ENCODE measurements at regions of chr3 and their contacts with region 1.

Region 1: DNA sequence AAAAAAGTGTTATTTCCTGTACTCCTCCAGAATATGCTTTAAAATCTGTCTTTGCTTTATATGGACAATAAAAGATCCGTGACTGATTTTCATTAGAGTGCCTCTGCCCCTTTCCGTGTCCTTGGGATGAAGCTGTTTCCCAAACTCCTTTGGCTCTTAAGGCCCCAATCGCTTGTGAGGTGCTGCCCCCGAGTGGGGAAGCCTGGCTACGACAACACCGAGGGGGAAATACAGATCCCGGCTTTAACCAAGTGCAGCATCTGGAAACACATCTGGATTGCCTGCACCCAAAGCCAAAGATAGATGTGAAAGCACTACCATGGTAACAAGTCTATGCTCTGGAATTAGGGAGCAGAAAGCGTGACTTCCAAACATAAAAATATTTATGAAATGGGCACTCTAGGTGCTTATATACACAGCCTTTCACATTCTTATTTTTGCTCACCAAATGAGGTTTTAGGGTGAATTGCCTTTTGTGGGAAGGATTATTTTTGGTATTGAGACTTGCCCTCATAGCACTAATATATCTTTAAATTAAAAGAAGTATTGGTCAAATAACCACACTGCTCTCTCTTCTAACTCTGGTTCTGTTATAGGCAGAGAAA is 40.6 kb upstream of the ADCY5 start:
- DNase-seq: peak; percentile 66
- ATAC-seq: peak; percentile 64
- H3K4me3 Mint-ChIP-seq: no peak overlapping the region
- H3K27ac Mint-ChIP-seq: no peak overlapping the region
- H3K4me1 Mint-ChIP-seq: peaks cover 7% of the 10 kb centered on the region
- H3K27me3 Mint-ChIP-seq: no peaks in the 10 kb centered on the region
- CTCF ChIP-seq: peak; percentile 86

Region 2: GRCh38 chr3:123328851-123329635 is 160.5 kb before region 1 on chr3:
- CTCF ChIA-PET with region 1: interaction called, 28 read pairs
- POLR2A ChIA-PET with region 1: no interaction called
- intact Hi-C with region 1: loop called (anchors 2 kb)
- DNase-seq: peak; percentile 83
- ATAC-seq: peak; percentile 93
- H3K4me3 Mint-ChIP-seq: no peak overlapping the region
- H3K27ac Mint-ChIP-seq: no peak overlapping the region
- H3K4me1 Mint-ChIP-seq: no peaks in the 10 kb centered on the region
- H3K27me3 Mint-ChIP-seq: peaks cover 2% of the 10 kb centered on the region
- CTCF ChIP-seq: peak; percentile 91

Region 3: GRCh38 chr3:123449102-123449996 is 40.2 kb before region 1 on chr3:
- CTCF ChIA-PET with region 1: interaction called, 22 read pairs
- POLR2A ChIA-PET with region 1: no interaction called
- intact Hi-C with region 1: no loop called
- DNase-seq: peak; percentile 10
- ATAC-seq: peak; percentile 49
- H3K4me3 Mint-ChIP-seq: no peak overlapping the region
- H3K27ac Mint-ChIP-seq: no peak overlapping the region
- H3K4me1 Mint-ChIP-seq: peaks cover 4% of the 10 kb centered on the region
- H3K27me3 Mint-ChIP-seq: peaks cover 35% of the 10 kb centered on the region
- CTCF ChIP-seq: no peak

Measured in activated CD8-positive, alpha-beta T cell treated with anti-CD3 and anti-CD28 coated beads for 36 hours (primary cell).